Activated T-helper 2 cell treated with anti-CD3 and anti-CD28 coated beads, Interferon-gamma antibody, Interleukin-2, Interleukin-4, amounts not matched to agents 10 μg/mL and 5 μg/mL and 100 μg/mL, durations not matched to agents 14 hours and 24 hours and 36 hours (primary cell): ENCODE measurements at regions of chr14 and their contacts with region 1.

Region 1: DNA sequence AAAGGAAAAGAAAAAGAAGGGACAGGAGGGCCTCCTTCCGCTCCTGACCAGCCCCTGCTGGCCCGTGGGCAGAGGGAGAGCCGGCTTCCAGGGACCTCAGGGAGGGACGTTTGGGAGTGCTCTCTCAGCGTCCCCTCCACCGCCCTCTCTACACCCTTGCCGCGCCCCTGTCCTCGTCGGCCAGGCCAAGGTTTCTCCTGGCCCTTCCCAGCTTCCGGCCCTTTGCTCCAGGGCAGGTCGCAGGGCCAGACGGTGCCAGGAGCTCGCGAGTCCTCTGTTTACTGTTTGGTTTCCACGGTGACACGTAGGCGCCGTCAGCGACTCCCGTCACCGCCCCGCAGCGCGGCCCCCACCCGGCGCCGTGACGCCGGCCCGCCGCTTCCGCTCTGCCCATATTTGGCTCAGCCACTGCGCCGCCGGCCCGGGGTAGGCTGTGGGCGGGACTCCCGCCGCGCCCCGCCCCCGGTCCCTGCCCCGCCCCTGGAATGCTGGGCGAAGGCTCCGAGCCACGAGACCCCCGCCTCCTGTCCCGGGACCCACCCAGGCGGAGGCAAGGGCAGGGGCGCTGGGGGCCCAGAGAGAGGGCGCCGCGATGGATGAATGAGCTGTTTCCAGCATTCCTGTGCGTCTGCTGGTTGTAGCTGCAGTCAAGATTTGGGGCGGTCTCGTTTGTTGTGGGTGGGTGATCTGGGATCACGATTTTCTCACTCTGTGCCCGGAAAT is 15.5 kb downstream of the FOS start:
- DNase-seq: peak; percentile 90
- H3K4me3 Mint-ChIP-seq: peak overlapping the region; percentile 84
- H3K27ac Mint-ChIP-seq: peak overlapping the region; percentile 91
- H3K4me1 Mint-ChIP-seq: peaks cover 27% of the 10 kb centered on the region
- H3K27me3 Mint-ChIP-seq: peaks cover 20% of the 10 kb centered on the region

Region 2: DNA sequence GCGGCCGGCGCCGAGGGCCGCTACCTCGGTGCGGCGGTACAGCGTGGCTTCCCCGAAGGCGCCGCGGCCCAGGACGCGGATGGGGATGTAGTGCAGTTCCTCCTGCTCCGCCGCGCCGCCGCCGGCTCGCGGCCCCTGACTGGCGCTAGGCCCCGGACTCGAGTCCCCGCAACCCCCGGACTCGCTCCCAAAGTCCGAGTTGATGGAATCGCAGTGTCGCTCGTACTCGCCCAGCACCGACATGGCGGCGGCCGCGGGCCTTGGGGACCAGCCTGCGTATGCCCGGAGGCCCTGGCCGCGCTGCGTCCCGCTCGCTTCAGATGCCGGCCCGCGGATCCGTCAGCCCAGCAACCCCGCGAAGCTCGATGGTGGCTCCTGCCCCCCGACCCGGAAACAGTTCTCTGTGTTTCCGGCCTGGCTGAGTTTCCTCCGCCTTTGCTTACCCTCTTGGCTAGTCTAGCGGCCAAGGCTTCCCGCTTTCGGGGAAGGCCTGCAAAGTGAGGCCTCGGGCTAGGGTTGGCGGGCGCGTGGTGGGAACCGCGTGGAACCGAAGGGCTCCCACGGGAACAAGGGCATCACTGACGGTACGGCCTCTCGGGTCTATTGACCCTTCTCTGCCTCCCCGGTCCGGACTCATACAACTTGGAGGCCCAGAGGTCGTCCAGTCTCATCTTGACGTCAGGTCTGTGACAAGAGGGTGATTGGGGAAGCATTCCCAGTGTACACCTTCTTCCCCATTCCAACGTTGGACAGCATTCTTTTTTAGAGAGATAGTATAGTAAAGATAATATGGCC is 167.2 kb before region 1 on chr14 and contains the start of gene NEK9:
- intact Hi-C with region 1: loop called (anchors 1 kb)
- DNase-seq: peak; percentile 85
- H3K4me3 Mint-ChIP-seq: peak within 1 kb of the TSS; percentile 98
- H3K27ac Mint-ChIP-seq: peak within 1 kb of the TSS; percentile 96
- H3K4me1 Mint-ChIP-seq: peaks cover 39% of the 10 kb centered on the region
- H3K27me3 Mint-ChIP-seq: no peaks in the 10 kb centered on the region
- total RNA-seq, gene NEK9: 58.1 and 69.8 TPM in 2 replicates

Region 3: DNA sequence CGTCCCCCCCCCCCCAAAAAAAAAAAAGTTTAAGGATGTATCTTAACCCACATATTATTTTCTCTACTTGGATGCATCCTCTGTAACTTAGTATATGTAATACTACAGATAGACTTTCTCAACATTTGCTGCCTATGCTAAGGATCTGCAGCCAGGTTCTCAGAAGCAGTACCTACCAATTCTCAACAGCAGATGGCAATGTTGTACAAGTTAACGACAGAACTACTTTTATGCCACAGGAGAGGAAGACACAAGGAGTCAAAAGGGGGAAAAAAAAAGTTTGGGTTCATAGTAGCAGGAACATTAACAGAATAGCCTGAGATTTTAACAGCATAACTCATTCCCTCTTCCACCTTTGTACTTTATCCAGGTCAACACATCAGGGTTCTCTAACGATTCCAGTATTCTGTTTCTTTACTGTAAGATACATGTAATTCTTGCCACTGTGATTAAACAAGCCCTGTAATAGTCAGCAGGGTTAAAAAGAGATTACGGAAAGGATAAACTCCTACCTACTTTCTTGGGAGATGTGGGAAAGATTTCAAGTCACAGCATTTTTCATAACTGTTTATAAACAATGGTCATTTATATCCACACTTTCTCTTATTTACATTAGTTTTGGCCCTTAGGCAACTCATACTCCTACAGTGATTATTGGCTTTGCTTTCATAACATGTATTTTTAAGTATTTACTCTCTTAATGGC is 161.5 kb before region 1 on chr14:
- intact Hi-C with region 1: loop called (anchors 1 kb)
- DNase-seq: peak; percentile 40
- H3K4me3 Mint-ChIP-seq: no peak overlapping the region
- H3K27ac Mint-ChIP-seq: no peak overlapping the region
- H3K4me1 Mint-ChIP-seq: peaks cover 22% of the 10 kb centered on the region
- H3K27me3 Mint-ChIP-seq: no peaks in the 10 kb centered on the region

Region 4: DNA sequence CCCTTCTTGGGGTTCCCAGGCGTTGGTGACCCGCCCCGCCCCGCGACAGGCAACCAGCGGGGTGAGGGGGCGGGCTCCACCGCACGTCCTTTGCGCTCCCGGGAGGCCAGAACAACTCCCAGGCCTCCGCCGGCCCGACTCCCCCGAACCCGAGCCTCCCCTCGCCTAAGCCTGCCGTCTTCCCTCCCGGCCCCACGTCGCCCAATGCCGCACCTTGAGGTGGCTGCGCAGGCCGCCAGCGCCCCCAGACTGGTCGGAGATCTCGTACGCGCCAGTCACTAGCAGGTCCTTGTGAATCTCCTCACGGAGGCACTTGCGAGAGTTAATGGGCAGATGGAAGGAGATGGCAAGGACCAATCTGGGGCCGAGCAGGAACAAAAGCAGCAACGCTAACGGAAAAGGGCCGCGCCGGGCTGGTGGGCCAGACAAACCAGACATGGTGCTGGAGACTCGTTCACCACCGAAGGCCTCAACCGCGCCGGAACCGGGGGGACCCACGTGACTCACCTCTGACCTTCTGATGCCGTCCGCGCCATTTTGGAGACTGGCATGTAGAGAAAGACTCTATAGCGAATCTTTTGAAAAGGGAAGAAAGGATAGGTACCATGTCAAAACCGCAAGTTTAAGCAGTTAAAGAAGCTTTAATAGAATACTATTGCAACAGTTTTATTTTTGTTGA is 117.8 kb before region 1 on chr14 and contains the start of gene TMED10:
- intact Hi-C with region 1: loop called (anchors 1 kb)
- DNase-seq: peak; percentile 88
- H3K4me3 Mint-ChIP-seq: peak within 1 kb of the TSS; percentile 87
- H3K27ac Mint-ChIP-seq: peak within 1 kb of the TSS; percentile 92
- H3K4me1 Mint-ChIP-seq: peaks cover 25% of the 10 kb centered on the region
- H3K27me3 Mint-ChIP-seq: peaks cover 3% of the 10 kb centered on the region
- total RNA-seq, gene TMED10: 231 and 248 TPM in 2 replicates

Region 5: DNA sequence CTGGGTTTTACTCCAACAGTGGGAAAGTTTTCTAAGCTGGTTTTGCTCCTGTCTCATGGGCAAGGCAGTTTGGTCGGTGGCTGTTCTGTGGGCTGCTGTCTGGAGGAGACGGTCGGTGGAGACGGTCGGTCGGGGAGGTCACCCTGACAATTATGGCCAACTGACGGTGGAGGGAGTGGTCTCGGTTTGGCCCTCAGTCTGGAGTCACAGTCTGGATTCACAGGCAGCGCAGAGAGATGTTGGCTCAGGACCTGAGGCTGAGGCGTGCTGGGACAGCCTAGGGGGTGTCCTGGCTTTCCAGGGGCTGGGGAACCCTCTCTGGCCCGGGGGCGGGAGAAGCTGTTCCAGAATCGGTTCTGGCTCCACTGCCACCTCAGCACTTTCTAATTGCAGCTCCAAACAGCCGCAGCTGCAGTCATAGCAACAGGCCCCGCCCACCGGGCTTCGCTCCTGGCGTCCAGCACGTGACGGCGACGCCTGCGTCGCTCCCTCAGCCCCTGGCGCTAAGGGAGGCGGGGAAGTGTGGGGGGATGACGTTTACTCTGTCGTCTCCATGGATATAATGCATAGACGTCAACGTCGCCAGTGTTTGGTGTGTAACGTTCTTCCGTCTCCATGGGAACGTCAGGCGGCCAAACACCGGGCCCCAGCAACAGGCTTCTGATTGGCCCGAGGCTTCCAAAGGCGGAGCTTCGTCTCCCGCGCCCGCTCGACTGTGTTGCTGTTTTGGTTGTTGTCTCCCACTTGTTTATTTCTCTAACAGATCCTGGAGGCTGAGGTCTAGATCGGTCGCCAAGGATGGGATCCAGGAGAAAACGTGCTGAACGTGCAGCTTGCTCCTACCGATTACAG is 35.2 kb before region 1 on chr14:
- intact Hi-C with region 1: loop called (anchors 1 kb)
- DNase-seq: peak; percentile 99
- H3K4me3 Mint-ChIP-seq: peak overlapping the region; percentile 75
- H3K27ac Mint-ChIP-seq: peak overlapping the region; percentile 96
- H3K4me1 Mint-ChIP-seq: peaks cover 30% of the 10 kb centered on the region
- H3K27me3 Mint-ChIP-seq: peaks cover 56% of the 10 kb centered on the region

Region 6: DNA sequence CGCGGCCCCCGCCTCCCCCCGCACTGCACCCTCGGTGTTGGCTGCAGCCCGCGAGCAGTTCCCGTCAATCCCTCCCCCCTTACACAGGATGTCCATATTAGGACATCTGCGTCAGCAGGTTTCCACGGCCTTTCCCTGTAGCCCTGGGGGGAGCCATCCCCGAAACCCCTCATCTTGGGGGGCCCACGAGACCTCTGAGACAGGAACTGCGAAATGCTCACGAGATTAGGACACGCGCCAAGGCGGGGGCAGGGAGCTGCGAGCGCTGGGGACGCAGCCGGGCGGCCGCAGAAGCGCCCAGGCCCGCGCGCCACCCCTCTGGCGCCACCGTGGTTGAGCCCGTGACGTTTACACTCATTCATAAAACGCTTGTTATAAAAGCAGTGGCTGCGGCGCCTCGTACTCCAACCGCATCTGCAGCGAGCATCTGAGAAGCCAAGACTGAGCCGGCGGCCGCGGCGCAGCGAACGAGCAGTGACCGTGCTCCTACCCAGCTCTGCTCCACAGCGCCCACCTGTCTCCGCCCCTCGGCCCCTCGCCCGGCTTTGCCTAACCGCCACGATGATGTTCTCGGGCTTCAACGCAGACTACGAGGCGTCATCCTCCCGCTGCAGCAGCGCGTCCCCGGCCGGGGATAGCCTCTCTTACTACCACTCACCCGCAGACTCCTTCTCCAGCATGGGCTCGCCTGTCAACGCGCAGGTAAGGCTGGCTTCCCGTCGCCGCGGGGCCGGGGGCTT is 15.5 kb before region 1 on chr14 and contains the start of gene FOS:
- intact Hi-C with region 1: loop called (anchors 1 kb)
- DNase-seq: peak; percentile 87
- H3K4me3 Mint-ChIP-seq: peak within 1 kb of the TSS; percentile 95
- H3K27ac Mint-ChIP-seq: peak within 1 kb of the TSS; percentile 97
- H3K4me1 Mint-ChIP-seq: peaks cover 35% of the 10 kb centered on the region
- H3K27me3 Mint-ChIP-seq: peaks cover 55% of the 10 kb centered on the region
- total RNA-seq, gene FOS: 24.7 and 27.8 TPM in 2 replicates